ENCODE measurements at regions of chr14 and their contacts with region 1.

Region 1: GRCh38 chr14:75542588-75543091 is 20.4 kb downstream of the BATF start:
- DNase-seq: peak; percentile 90
- ATAC-seq: peak; percentile 89
- H3K4me3 Mint-ChIP-seq: peak overlapping the region; percentile 54
- H3K27ac Mint-ChIP-seq: peak overlapping the region; percentile 96
- H3K4me1 Mint-ChIP-seq: peaks cover 57% of the 10 kb centered on the region
- H3K27me3 Mint-ChIP-seq: no peaks in the 10 kb centered on the region
- CTCF ChIP-seq: no peak

Region 2: DNA sequence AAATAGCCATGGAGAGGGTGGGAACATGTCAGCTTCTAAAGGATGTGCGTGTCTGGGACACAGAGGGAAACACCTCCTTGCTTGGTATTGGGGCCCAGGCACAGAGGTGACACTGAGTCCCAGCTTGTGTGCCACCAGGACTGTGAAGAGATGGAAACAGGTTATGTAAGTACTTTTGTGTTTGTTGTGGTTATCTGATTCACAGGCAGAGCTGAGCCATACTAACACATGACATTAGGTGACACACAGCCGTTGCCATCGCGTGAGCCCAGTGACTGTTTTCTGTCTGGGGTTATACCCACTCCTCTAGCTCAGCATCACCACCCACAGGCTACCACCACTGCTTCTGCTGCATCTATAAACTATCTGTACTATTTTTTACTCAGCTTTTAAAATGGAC is 23.7 kb after region 1 on chr14:
- CTCF ChIA-PET with region 1: interaction called, 17 read pairs
- POLR2A ChIA-PET with region 1: interaction called, 27 read pairs
- intact Hi-C with region 1: no loop called
- DNase-seq: peak; percentile 96
- ATAC-seq: peak; percentile 82
- H3K4me3 Mint-ChIP-seq: peak overlapping the region; percentile 30
- H3K27ac Mint-ChIP-seq: peak overlapping the region; percentile 88
- H3K4me1 Mint-ChIP-seq: peaks cover 76% of the 10 kb centered on the region
- H3K27me3 Mint-ChIP-seq: no peaks in the 10 kb centered on the region
- CTCF ChIP-seq: no peak

Region 3: DNA sequence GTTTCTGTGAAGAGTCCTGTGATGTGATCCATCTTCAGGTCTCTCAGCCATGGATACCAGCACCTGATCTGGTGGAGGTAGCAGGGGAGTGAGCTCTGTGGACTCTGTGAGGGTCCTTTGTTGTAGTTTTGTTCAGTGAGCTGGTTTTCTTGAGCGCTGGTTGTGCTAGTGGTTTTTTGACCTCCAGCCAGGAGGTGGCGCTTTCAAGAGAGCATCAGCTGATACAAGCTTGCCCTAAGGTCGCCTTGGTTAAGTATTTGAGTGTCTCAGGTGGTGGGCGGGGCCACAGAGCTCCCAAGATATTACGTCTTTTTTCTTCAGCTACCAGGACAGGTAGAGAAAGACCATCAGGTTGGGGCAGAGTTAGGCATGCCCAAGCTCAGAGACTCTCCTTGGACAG is 258.2 kb after region 1 on chr14:
- CTCF ChIA-PET with region 1: no interaction called
- POLR2A ChIA-PET with region 1: no interaction called
- intact Hi-C with region 1: no loop called
- DNase-seq: peak; percentile 15
- ATAC-seq: no peak
- H3K4me3 Mint-ChIP-seq: no peak overlapping the region
- H3K27ac Mint-ChIP-seq: no peak overlapping the region
- H3K4me1 Mint-ChIP-seq: no peaks in the 10 kb centered on the region
- H3K27me3 Mint-ChIP-seq: no peaks in the 10 kb centered on the region
- CTCF ChIP-seq: no peak